Activated naive CD4-positive, alpha-beta T cell treated with anti-CD3 and anti-CD28 coated beads for 36 hours (primary cell): ENCODE measurements at regions of chr5 and their contacts with region 1.

Region 1: DNA sequence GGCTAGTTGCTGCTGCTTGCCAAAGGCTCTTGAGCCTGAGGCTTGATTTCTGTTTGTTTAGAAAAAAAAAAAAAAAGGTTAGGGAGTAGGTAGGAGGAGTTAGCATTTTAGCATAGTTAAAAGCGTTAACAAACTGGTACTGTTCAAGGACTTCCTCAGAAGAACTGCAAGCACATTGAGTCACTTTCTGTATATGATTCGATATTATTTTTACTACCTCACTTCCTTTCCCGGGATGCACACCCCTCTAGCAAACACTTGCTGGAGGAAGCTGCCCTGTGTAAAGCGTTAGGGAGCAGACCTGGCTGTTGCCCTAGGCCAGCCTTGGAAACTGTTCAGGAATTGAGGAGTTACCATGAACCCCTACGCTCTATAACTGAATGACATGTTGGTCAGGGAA is 15.7 kb upstream of the CEP120 start:
- DNase-seq: peak; percentile 57
- H3K4me3 Mint-ChIP-seq: no peak overlapping the region
- H3K27ac Mint-ChIP-seq: peak overlapping the region; percentile 68
- H3K4me1 Mint-ChIP-seq: peaks cover 26% of the 10 kb centered on the region
- H3K27me3 Mint-ChIP-seq: no peaks in the 10 kb centered on the region

Region 2: GRCh38 chr5:123382252-123382651 is 56.6 kb before region 1 on chr5:
- CTCF ChIA-PET with region 1: no interaction called
- intact Hi-C with region 1: no loop called
- DNase-seq: no peak
- H3K4me3 Mint-ChIP-seq: no peak overlapping the region
- H3K27ac Mint-ChIP-seq: no peak overlapping the region
- H3K4me1 Mint-ChIP-seq: no peaks in the 10 kb centered on the region
- H3K27me3 Mint-ChIP-seq: no peaks in the 10 kb centered on the region

Region 3: GRCh38 chr5:123450640-123451039 is 11.7 kb after region 1 on chr5:
- CTCF ChIA-PET with region 1: no interaction called
- intact Hi-C with region 1: loop called (anchors 1 kb)
- DNase-seq: no peak
- H3K4me3 Mint-ChIP-seq: no peak overlapping the region
- H3K27ac Mint-ChIP-seq: no peak overlapping the region
- H3K4me1 Mint-ChIP-seq: peaks cover 34% of the 10 kb centered on the region
- H3K27me3 Mint-ChIP-seq: peaks cover 9% of the 10 kb centered on the region

Region 4: GRCh38 chr5:123460296-123460729 is 21.4 kb after region 1 on chr5:
- CTCF ChIA-PET with region 1: no interaction called
- intact Hi-C with region 1: loop called (anchors 1 kb)
- DNase-seq: peak; percentile 81
- H3K4me3 Mint-ChIP-seq: peak overlapping the region; percentile 10
- H3K27ac Mint-ChIP-seq: peak overlapping the region; percentile 90
- H3K4me1 Mint-ChIP-seq: peaks cover 20% of the 10 kb centered on the region
- H3K27me3 Mint-ChIP-seq: no peaks in the 10 kb centered on the region

Region 5: GRCh38 chr5:123486951-123487655 is 48.2 kb after region 1 on chr5:
- CTCF ChIA-PET with region 1: no interaction called
- intact Hi-C with region 1: no loop called
- DNase-seq: no peak
- H3K4me3 Mint-ChIP-seq: no peak overlapping the region
- H3K27ac Mint-ChIP-seq: no peak overlapping the region
- H3K4me1 Mint-ChIP-seq: no peaks in the 10 kb centered on the region
- H3K27me3 Mint-ChIP-seq: peaks cover 7% of the 10 kb centered on the region